PC-9 (cell line): ENCODE measurements at regions of chr1 and their contacts with region 1.

Region 1: GRCh38 chr1:221741711-221742554 is at the start of gene DUSP10:
- DNase-seq: peak; percentile 98 to 99
- H3K4me3 ChIP-seq: peak within 1 kb of the TSS; percentile 72
- H3K27ac ChIP-seq: peak within 1 kb of the TSS; percentile 88
- H3K4me1 ChIP-seq: peaks cover 26% of the 10 kb centered on the region
- H3K27me3 ChIP-seq: no peaks in the 10 kb centered on the region
- CTCF ChIP-seq: 0 out of 2 replicates have a peak, but pooled peaks have one; percentile 18
- total RNA-seq, gene DUSP10: 7.0 and 8.7 TPM in 2 replicates

Region 2: GRCh38 chr1:221478050-221478949 is 263.6 kb before region 1 on chr1:
- CTCF ChIA-PET with region 1: interaction called, 9 read pairs
- POLR2A ChIA-PET with region 1: no interaction called
- intact Hi-C with region 1: loop called (anchors 1 kb)
- DNase-seq: peak; percentile 74 to 80
- H3K4me3 ChIP-seq: no peak overlapping the region
- H3K27ac ChIP-seq: no peak overlapping the region
- H3K4me1 ChIP-seq: peaks cover 13% of the 10 kb centered on the region
- H3K27me3 ChIP-seq: no peaks in the 10 kb centered on the region
- CTCF ChIP-seq: peak; percentile 79

Region 3: GRCh38 chr1:221594576-221594975 is 147.4 kb before region 1 on chr1:
- CTCF ChIA-PET with region 1: no interaction called
- POLR2A ChIA-PET with region 1: no interaction called
- intact Hi-C with region 1: no loop called
- DNase-seq: no peak
- H3K4me3 ChIP-seq: no peak overlapping the region
- H3K27ac ChIP-seq: no peak overlapping the region
- H3K4me1 ChIP-seq: no peaks in the 10 kb centered on the region
- H3K27me3 ChIP-seq: no peaks in the 10 kb centered on the region
- CTCF ChIP-seq: no peak

Region 4: GRCh38 chr1:221620437-221621384 is 121.2 kb before region 1 on chr1:
- CTCF ChIA-PET with region 1: no interaction called
- POLR2A ChIA-PET with region 1: no interaction called
- intact Hi-C with region 1: no loop called
- DNase-seq: no peak
- H3K4me3 ChIP-seq: no peak overlapping the region
- H3K27ac ChIP-seq: no peak overlapping the region
- H3K4me1 ChIP-seq: peaks cover 10% of the 10 kb centered on the region; the same call in 1 of the 2 replicates
- H3K27me3 ChIP-seq: no peaks in the 10 kb centered on the region
- CTCF ChIP-seq: no peak

Region 5: DNA sequence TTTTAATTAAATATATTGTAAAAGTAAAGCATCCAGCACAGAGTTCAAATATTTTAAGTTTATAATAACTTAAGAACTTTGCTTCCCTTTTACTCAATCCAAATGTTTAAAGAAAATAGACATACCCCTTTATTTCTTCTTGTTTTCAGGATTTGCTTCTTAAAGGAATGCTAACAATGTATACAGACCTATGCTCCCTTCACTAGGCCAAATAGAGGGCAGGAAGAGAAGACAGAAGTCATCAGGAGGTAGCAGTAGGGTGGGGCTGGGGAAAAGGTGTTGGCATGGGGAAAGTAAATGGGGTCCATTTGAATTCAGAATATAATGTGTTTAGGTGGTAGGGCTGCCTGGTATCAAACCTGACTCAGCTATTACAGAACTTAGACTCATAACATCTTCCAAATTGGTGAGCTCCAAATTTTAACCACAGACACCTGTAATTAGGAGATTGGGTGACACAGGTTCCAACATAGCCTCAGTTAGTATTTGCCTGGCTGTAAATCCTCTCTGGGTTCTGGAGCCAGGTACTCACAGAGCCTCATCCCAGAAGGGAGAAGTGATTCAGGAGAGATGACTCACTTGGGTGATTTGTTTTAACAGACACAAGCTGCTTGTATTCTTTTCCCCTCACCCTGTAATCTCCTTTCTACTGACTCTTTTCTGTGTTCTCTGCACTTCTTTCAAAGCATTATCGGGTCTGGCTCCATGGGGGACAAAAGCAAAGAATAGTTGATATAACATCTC is 60.0 kb after region 1 on chr1:
- CTCF ChIA-PET with region 1: interaction called, 15 read pairs
- POLR2A ChIA-PET with region 1: interaction called, 8 read pairs
- intact Hi-C with region 1: no loop called
- DNase-seq: peak in 1 of 2 experiments; percentile 49
- H3K4me3 ChIP-seq: no peak overlapping the region
- H3K27ac ChIP-seq: peak overlapping the region; percentile 47
- H3K4me1 ChIP-seq: peaks cover 15% of the 10 kb centered on the region
- H3K27me3 ChIP-seq: no peaks in the 10 kb centered on the region
- CTCF ChIP-seq: no peak

Region 6: DNA sequence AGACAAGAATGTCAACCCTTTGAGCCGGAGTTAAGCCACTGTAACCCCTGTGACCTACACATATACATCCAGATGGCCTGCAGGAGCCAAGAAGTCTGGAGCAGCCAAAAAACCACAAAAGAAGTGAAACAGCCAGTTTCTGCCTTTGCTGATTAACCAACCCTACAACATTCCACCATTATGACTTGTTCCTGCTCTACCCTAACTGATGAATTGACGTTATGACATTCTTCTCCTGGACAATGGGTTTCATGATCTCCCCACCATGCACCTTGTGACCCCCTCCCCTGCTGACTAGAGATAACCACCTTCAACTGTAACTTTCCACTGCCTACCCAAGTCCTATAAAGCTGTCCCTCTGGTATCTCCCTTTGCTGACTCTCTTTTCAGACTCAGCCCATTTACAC is 216.2 kb after region 1 on chr1:
- CTCF ChIA-PET with region 1: interaction called, 3 read pairs
- POLR2A ChIA-PET with region 1: interaction called, 4 read pairs
- intact Hi-C with region 1: loop called (anchors 1 kb)
- DNase-seq: peak; percentile 85 to 99
- H3K4me3 ChIP-seq: 0 out of 2 replicates have a peak overlapping the region, but pooled peaks have one; percentile 11
- H3K27ac ChIP-seq: peak overlapping the region; percentile 95
- H3K4me1 ChIP-seq: peaks cover 61% of the 10 kb centered on the region
- H3K27me3 ChIP-seq: no peaks in the 10 kb centered on the region
- CTCF ChIP-seq: no peak

Region 7: GRCh38 chr1:222105393-222105737 is 363.4 kb after region 1 on chr1:
- CTCF ChIA-PET with region 1: interaction called, 6 read pairs
- POLR2A ChIA-PET with region 1: no interaction called
- intact Hi-C with region 1: loop called (anchors 1 kb)
- DNase-seq: peak in 1 of 2 experiments; percentile 61
- H3K4me3 ChIP-seq: no peak overlapping the region
- H3K27ac ChIP-seq: no peak overlapping the region
- H3K4me1 ChIP-seq: peaks cover 6% of the 10 kb centered on the region; the same call in 1 of the 2 replicates
- H3K27me3 ChIP-seq: no peaks in the 10 kb centered on the region
- CTCF ChIP-seq: peak; percentile 33; the same call in 1 of the 2 replicates